Esophagus squamous epithelium (tissue), 5 donors: ENCODE measurements at regions of chr22 and their contacts with region 1.

Region 1: GRCh38 chr22:39534591-39535356 is 2.2 kb upstream of the RPS19BP1 start:
- DNase-seq: no peak
- H3K4me3 ChIP-seq: peak overlapping the region in 2 of 4 donors; percentile 22 to 43
- H3K27ac ChIP-seq: peak overlapping the region in 2 of 4 donors; percentile 4 to 55
- H3K4me1 ChIP-seq: peaks cover 20 to 46% (median 26%) of the 10 kb centered on the region in 3 donors
- H3K27me3 ChIP-seq: no peaks in the 10 kb centered on the region
- CTCF ChIP-seq: peak; percentile 91 to 99 (median 95)
- POLR2A ChIP-seq: no peak

Region 2: DNA sequence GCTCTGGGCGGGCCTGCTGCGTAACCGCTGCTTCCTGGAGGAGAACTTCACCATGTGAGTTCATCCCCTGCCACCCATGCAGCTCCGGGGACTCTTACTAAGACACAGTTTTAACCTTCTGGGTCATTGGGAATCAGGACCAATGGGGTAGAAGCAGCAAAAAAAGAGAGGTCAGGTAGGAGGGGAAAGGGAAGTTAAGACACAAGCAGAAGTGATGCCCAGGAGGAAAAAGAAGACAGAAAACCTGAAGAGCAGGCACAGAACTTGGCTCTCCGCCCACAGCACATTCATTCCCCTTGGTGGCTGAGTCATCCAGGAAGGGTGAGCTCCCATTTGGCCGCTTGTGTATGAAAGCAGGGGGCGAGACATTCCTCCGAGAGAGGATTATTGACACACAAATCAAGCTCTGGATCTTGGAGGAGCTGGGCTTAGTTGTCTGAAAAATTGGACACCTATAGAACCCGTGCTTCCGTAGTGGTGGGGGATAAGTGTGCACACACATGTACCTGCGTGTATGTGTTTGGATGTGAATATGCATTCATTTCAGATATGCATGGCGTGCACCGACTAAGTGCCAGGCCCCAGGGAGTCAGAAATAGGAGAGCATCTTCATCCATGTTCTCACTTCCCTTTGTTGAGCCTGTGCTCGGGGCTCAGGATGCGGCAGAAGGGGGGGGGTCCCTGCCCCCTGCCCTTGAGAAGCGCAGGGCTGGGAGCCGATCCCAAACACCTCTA is 100.1 kb after region 1 on chr22:
- intact Hi-C with region 1: no loop called
- DNase-seq: no peak
- H3K4me3 ChIP-seq: no peak overlapping the region
- H3K27ac ChIP-seq: no peak overlapping the region
- H3K4me1 ChIP-seq: peaks cover 0 to 27% (median 3%) of the 10 kb centered on the region in 3 donors
- H3K27me3 ChIP-seq: peaks cover 0 to 32% (median 0%) of the 10 kb centered on the region in 4 donors
- CTCF ChIP-seq: no peak
- POLR2A ChIP-seq: no peak

Region 3: GRCh38 chr22:40031766-40032470 is 497.1 kb after region 1 on chr22:
- intact Hi-C with region 1: loop called (anchors 5 kb)
- DNase-seq: no peak
- H3K4me3 ChIP-seq: no peak overlapping the region
- H3K27ac ChIP-seq: no peak overlapping the region
- H3K4me1 ChIP-seq: peaks cover 5 to 41% (median 16%) of the 10 kb centered on the region in 3 donors
- H3K27me3 ChIP-seq: peaks cover 0 to 7% (median 0%) of the 10 kb centered on the region in 4 donors
- CTCF ChIP-seq: no peak
- POLR2A ChIP-seq: no peak